Motor neuron (in vitro differentiated cells): ENCODE measurements at regions of chr17 and their contacts with region 1.

Region 1: DNA sequence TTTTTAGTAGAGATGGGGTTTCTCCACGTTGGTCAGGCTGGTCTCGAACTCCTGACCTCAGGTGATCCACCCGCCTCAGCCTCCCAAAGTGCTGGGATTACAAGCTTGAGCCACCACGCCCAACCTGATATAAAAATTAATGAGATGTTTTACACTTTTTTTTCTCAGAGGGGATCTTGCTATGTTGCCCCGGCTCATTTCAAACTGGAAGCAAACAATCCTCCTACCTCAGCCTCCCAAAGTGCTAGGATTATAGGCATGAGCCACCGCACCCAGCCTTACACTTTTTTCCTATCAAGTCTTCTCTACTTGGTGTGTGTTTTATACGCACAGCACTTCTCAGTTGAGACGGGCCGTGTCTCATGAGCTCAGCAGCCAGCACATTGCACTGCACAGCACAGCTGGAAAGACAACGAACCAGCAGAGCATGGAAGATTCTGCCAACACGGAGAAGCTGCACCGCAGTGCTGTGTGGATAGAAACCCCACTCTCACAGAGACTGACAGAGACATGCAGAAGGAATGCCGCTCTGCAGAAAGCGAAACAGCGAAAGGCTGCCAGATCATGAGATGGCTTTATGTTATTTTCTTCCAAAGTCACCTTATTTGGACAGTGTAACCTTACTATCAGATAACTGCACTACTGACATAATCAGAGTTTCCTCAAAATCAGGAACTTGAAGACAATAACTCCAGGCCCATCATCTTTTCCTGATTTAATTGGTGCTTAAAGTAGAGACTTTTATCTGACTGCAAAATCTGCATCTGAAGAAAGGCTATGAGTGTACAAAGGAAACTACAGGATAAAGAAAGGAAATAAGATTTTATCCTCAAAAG is 6.5 kb upstream of the QRICH2 start:
- ATAC-seq: no peak
- H3K4me3 ChIP-seq: no peak overlapping the region
- H3K27ac ChIP-seq: no peak overlapping the region
- H3K4me1 ChIP-seq: peaks cover 12 to 16% of the 10 kb centered on the region in 2 donors

Region 2: GRCh38 chr17:75679706-75680442 is 634.7 kb before region 1 on chr17:
- in situ Hi-C with region 1: no loop called
- ATAC-seq: peak in 4 of 8 experiments; percentile 35 to 84 (median 71)
- H3K4me3 ChIP-seq: no peak overlapping the region
- H3K27ac ChIP-seq: no peak overlapping the region
- H3K4me1 ChIP-seq: no peaks in the 10 kb centered on the region

Region 3: GRCh38 chr17:76204277-76204676 is 110.3 kb before region 1 on chr17:
- in situ Hi-C with region 1: no loop called
- ATAC-seq: peak in 2 of 8 experiments; percentile 36 to 39
- H3K4me3 ChIP-seq: no peak overlapping the region
- H3K27ac ChIP-seq: no peak overlapping the region
- H3K4me1 ChIP-seq: peaks cover 0 to 12% of the 10 kb centered on the region in 2 donors

Region 4: DNA sequence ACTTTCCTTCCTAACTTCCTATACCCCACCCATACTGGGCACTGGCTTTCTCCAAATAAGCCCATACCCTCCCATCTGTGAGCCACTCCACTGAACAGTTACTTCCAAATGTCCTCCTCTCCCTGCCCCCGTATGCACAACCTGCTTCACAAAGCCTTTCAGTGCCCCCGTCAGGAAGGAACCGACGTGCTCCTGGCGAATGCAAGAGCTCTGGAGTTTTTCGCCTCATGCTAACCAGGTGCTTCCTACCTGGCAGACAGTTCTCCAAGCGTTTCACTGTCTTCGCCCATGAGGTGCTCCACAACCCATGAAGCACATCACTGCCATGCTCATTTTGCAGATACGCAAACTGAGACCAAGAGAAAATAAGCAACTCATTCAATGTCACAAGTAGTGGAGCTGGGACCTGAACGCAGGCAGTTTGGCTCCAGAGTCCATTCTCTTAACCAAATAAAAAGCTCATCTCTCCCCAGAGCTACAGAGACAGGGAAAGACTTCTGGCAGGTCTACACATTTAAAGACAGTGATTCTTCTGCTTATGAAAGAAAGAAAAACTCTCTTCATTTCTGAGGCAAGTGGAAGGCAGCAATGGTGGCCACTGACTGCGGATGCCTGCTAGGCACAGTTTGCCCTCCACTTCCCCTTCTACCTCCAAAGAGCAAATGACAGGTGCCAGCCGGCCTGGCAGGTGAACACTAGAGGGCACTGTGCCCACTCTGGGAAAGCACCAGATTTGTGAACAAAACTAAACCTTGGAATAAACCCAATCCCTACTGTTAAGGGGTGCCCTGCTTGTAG is 93.6 kb after region 1 on chr17:
- in situ Hi-C with region 1: loop called in 1 of 9 experiments (anchors 25 kb)
- ATAC-seq: peak in 6 of 8 experiments; percentile 31 to 77 (median 52)
- H3K4me3 ChIP-seq: no peak overlapping the region
- H3K27ac ChIP-seq: no peak overlapping the region
- H3K4me1 ChIP-seq: no peaks in the 10 kb centered on the region

Region 5: GRCh38 chr17:76578344-76578979 is 263.9 kb after region 1 on chr17:
- in situ Hi-C with region 1: no loop called
- ATAC-seq: peak in 4 of 8 experiments; percentile 62 to 99 (median 97)
- H3K4me3 ChIP-seq: no peak overlapping the region
- H3K27ac ChIP-seq: no peak overlapping the region
- H3K4me1 ChIP-seq: no peaks in the 10 kb centered on the region